CD8-positive, alpha-beta T cell (primary cell): ENCODE measurements at regions of chr1 and their contacts with region 1.

Region 1: DNA sequence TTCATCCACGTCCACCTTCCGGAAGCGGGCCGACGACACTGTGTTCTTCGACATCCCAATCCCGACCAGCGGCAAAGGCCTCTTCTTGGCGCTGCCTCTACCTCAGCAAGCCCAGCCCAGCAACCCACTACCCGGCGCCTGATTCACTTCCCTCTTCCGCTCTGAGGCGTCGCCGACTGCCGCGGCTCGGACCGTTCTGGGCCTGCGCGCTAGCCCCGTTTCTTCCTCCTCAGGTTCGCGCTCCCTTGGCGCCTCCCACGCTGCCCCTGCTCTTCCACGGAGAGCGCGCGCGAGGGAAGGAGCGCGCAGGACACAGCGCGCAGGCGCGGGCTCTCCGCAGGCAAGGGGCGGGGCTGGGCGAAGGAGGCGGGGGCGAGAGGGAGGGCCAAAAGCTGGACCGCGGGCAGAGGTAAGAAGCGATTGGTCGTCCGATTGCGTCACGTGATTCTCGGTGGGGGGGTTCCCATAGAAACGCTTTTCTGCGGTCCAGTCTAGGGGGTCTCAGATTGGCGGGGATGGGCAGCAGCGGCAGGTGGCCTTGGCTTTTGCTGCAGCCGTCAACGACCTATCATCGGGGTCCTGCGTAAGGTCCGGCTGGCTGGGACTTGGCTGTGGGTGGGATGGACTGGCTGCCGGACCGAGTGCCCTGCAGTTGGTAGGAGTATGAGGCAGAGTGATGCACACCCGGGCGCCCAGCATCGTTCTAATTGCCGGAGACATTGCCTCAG is at the start of gene ARPC5:
- DNase-seq: peak; percentile 89 to 98 (median 94)
- ATAC-seq: peak; percentile 85
- H3K4me3 ChIP-seq: peak within 1 kb of the TSS; percentile 82 to 94
- H3K4me3 Mint-ChIP-seq: peak within 1 kb of the TSS; percentile 100
- H3K27ac ChIP-seq: peak within 1 kb of the TSS; percentile 61 to 82
- H3K27ac Mint-ChIP-seq: peak within 1 kb of the TSS; percentile 99
- H3K4me1 ChIP-seq: peaks cover 31% of the 10 kb centered on the region
- H3K4me1 Mint-ChIP-seq: peaks cover 47% of the 10 kb centered on the region
- H3K27me3 ChIP-seq: no peaks in the 10 kb centered on the region
- H3K27me3 Mint-ChIP-seq: no peaks in the 10 kb centered on the region
- CTCF ChIP-seq: no peak
- total RNA-seq, gene ARPC5: 14.2 to 17.1 TPM

Region 2: DNA sequence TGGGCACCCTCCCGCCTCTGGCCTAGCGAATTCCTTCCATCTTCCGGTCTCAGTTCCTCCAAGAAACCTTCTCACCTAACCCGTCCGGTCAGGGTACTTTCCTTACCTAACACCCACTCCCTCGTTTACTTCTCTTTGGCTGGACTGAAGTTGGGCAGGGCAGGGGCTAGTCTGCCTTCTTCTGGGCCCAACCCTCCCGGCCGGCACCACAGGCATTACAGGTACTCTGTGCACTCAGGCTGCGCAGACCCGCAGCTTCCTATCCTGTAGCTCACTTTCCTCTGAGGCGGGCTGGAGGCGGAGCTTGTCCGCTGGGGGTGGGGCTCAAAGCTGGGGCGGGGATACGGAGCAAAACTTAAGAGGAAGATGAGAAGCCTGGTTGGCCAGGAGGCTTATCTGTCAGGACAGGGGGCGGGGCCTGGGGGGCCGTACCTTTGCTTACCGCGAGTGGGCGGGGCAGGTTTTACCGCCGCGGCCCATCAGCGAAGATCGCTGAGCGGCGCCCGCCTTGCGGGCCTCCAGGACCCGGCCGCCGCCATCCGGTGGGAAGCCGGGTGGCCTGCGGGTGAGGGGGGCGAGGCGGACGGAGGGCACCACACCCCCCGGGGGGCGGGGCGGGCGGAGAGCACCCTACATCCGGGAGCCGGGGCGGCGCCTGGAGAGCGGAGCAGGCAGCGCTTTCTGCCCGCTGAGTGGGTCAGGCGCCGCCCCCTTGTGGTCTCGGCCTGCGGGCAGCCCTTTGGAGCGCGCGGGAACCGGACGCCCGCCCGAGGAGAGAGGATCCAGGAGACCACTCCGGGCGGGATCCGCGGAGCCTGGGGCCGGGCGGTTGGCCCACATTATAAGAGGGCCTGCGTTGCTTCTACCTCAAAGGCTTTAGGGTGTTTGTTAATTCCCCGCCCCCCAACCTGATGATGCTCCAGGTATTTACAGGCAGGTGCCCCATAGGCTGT is 1606.1 kb before region 1 on chr1:
- CTCF ChIA-PET with region 1: no interaction called
- POLR2A ChIA-PET with region 1: no interaction called
- intact Hi-C with region 1: loop called in 1 of 2 experiments (anchors 5 kb)
- DNase-seq: peak; percentile 96 to 99 (median 98)
- ATAC-seq: peak; percentile 93
- H3K4me3 ChIP-seq: peak overlapping the region; percentile 76 to 77
- H3K4me3 Mint-ChIP-seq: peak overlapping the region; percentile 93
- H3K27ac ChIP-seq: peak overlapping the region; percentile 68 to 84
- H3K27ac Mint-ChIP-seq: peak overlapping the region; percentile 98
- H3K4me1 ChIP-seq: peaks cover 16% of the 10 kb centered on the region
- H3K4me1 Mint-ChIP-seq: peaks cover 18% of the 10 kb centered on the region
- H3K27me3 ChIP-seq: no peaks in the 10 kb centered on the region
- H3K27me3 Mint-ChIP-seq: no peaks in the 10 kb centered on the region
- CTCF ChIP-seq: no peak

Region 3: GRCh38 chr1:182789138-182790076 is 846.4 kb before region 1 on chr1 and contains the start of gene NPL:
- CTCF ChIA-PET with region 1: no interaction called
- POLR2A ChIA-PET with region 1: no interaction called
- intact Hi-C with region 1: loop called in 1 of 2 experiments (anchors 2 kb)
- DNase-seq: peak; percentile 65 to 92 (median 83)
- ATAC-seq: peak; percentile 96
- H3K4me3 ChIP-seq: peak within 1 kb of the TSS; percentile 69 to 75
- H3K4me3 Mint-ChIP-seq: peak within 1 kb of the TSS; percentile 91
- H3K27ac ChIP-seq: peak within 1 kb of the TSS; percentile 45 to 57
- H3K27ac Mint-ChIP-seq: peak within 1 kb of the TSS; percentile 76
- H3K4me1 ChIP-seq: peaks cover 12% of the 10 kb centered on the region
- H3K4me1 Mint-ChIP-seq: peaks cover 14% of the 10 kb centered on the region
- H3K27me3 ChIP-seq: no peaks in the 10 kb centered on the region
- H3K27me3 Mint-ChIP-seq: no peaks in the 10 kb centered on the region
- CTCF ChIP-seq: no peak
- total RNA-seq, gene NPL: 1.3 to 2.1 TPM

Region 4: GRCh38 chr1:183506561-183506960 is 129.2 kb before region 1 on chr1:
- CTCF ChIA-PET with region 1: no interaction called
- POLR2A ChIA-PET with region 1: no interaction called
- intact Hi-C with region 1: no loop called
- DNase-seq: no peak
- ATAC-seq: no peak
- H3K4me3 ChIP-seq: no peak overlapping the region
- H3K4me3 Mint-ChIP-seq: no peak overlapping the region
- H3K27ac ChIP-seq: no peak overlapping the region
- H3K27ac Mint-ChIP-seq: no peak overlapping the region
- H3K4me1 ChIP-seq: no peaks in the 10 kb centered on the region
- H3K4me1 Mint-ChIP-seq: peaks cover 34% of the 10 kb centered on the region
- H3K27me3 ChIP-seq: no peaks in the 10 kb centered on the region
- H3K27me3 Mint-ChIP-seq: no peaks in the 10 kb centered on the region
- CTCF ChIP-seq: no peak

Region 5: GRCh38 chr1:183655562-183656075 is 19.8 kb after region 1 on chr1:
- CTCF ChIA-PET with region 1: interaction called, 10 read pairs
- POLR2A ChIA-PET with region 1: interaction called, 3 read pairs
- intact Hi-C with region 1: no loop called
- DNase-seq: peak; percentile 37 to 83 (median 77)
- ATAC-seq: peak; percentile 84
- H3K4me3 ChIP-seq: no peak overlapping the region
- H3K4me3 Mint-ChIP-seq: no peak overlapping the region
- H3K27ac ChIP-seq: no peak overlapping the region
- H3K27ac Mint-ChIP-seq: no peak overlapping the region
- H3K4me1 ChIP-seq: peaks cover 19% of the 10 kb centered on the region
- H3K4me1 Mint-ChIP-seq: peaks cover 29% of the 10 kb centered on the region
- H3K27me3 ChIP-seq: no peaks in the 10 kb centered on the region
- H3K27me3 Mint-ChIP-seq: no peaks in the 10 kb centered on the region
- CTCF ChIP-seq: peak; percentile 85

Region 6: DNA sequence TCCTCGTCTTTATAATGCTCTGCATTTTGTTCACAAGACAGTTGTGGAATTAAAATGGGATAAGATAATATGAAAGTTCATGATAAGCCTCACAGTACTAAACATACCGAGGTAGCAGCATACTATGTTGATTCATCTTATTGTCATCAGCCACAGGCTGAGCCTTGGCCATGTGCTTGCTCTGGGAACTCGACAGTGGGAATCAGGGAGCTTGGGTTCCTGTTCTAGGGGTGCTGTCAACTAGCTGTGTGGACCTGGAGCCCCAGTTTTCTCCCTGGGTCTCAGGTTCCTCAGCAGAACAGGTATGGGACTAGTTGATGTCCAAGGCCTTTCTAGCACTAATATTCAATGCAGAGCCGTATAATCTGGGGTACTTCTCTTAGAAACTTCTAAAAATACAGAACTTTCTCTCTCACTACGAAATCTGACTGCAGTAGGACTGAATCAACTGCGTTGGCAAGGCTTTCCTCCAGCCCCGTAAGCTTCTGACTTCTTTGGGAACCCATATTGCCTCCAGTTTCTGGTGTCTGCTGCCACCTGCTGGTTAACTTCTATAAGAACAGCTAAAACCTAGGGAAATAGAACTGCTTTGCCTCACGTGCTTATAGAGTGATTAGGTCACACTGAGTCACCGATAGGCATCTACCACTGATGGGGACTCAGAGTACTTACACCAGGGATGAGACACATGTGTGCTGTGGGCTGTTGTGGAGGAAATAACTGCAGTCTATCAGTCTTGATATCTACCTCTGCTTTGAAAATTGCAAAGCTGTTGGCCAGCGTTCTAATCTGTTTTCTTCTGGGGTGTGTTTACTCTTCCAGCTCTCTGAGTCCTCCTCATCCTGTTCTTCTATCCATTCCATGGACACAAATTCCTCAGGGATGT is 280.1 kb after region 1 on chr1:
- CTCF ChIA-PET with region 1: interaction called, 5 read pairs
- POLR2A ChIA-PET with region 1: no interaction called
- intact Hi-C with region 1: loop called in 1 of 2 experiments (anchors 1 kb)
- DNase-seq: peak; percentile 44 to 87 (median 70)
- ATAC-seq: peak; percentile 99
- H3K4me3 ChIP-seq: no peak overlapping the region
- H3K4me3 Mint-ChIP-seq: peak overlapping the region; percentile 0
- H3K27ac ChIP-seq: no peak overlapping the region
- H3K27ac Mint-ChIP-seq: peak overlapping the region; percentile 30
- H3K4me1 ChIP-seq: peaks cover 4% of the 10 kb centered on the region
- H3K4me1 Mint-ChIP-seq: peaks cover 10% of the 10 kb centered on the region
- H3K27me3 ChIP-seq: no peaks in the 10 kb centered on the region
- H3K27me3 Mint-ChIP-seq: no peaks in the 10 kb centered on the region
- CTCF ChIP-seq: peak; percentile 83

Region 7: DNA sequence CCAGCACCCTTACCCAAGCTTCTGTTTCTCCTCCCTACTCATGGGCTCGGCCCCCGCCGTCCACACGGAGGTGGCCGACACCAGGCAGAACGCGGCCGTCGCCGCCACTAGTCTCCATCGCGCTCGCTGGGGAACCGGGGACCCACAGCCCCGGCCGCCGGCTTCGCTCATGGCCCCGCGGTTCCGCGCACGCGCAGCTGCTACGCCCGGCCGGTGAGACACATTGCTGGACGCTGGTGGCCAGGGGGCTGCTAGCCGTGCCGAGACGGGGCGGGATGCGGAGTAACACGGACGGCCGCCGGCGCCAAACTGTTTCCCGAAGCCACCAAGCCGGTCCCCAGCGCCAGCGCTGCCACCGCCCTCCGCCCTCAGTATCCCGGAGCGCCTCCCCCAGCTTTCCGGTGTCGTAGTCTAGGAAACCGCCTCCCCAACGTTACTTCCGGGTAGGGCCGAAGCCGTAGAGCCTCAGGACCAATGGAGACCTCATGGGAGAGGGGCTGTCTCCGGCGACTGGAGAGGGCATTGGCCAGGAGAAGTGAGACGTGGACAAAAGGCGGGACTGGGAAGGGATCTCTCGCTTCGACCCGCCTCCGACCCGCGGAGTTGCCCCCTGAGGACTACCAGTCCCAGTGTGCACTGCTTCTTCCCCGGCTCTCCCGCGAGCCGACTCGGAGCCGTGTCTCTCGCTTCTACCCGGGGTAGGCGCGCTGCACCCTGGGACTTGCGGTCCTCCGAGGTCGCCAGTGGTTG is 1118.9 kb after region 1 on chr1 and contains the start of gene EDEM3:
- CTCF ChIA-PET with region 1: no interaction called
- POLR2A ChIA-PET with region 1: no interaction called
- intact Hi-C with region 1: loop called in 1 of 2 experiments (anchors 2 kb)
- DNase-seq: peak; percentile 94 to 100 (median 97)
- ATAC-seq: peak; percentile 92
- H3K4me3 ChIP-seq: peak within 1 kb of the TSS; percentile 80 to 91
- H3K4me3 Mint-ChIP-seq: peak within 1 kb of the TSS; percentile 93
- H3K27ac ChIP-seq: peak within 1 kb of the TSS; percentile 80 to 84
- H3K27ac Mint-ChIP-seq: peak within 1 kb of the TSS; percentile 97
- H3K4me1 ChIP-seq: peaks cover 22% of the 10 kb centered on the region
- H3K4me1 Mint-ChIP-seq: peaks cover 50% of the 10 kb centered on the region
- H3K27me3 ChIP-seq: no peaks in the 10 kb centered on the region
- H3K27me3 Mint-ChIP-seq: no peaks in the 10 kb centered on the region
- CTCF ChIP-seq: no peak
- total RNA-seq, gene EDEM3: 9.3 to 14.8 TPM